HEK293 (cell line): ENCODE measurements at regions of chr6 and their contacts with region 1.

Region 1: GRCh38 chr6:109705258-109705657 is 14.2 kb downstream of the FIG4 start:
- H3K4me3 ChIP-seq: no peak overlapping the region
- H3K27ac ChIP-seq: no peak overlapping the region
- H3K4me1 ChIP-seq: no peaks in the 10 kb centered on the region
- CTCF ChIP-seq: peak; percentile 95

Region 2: DNA sequence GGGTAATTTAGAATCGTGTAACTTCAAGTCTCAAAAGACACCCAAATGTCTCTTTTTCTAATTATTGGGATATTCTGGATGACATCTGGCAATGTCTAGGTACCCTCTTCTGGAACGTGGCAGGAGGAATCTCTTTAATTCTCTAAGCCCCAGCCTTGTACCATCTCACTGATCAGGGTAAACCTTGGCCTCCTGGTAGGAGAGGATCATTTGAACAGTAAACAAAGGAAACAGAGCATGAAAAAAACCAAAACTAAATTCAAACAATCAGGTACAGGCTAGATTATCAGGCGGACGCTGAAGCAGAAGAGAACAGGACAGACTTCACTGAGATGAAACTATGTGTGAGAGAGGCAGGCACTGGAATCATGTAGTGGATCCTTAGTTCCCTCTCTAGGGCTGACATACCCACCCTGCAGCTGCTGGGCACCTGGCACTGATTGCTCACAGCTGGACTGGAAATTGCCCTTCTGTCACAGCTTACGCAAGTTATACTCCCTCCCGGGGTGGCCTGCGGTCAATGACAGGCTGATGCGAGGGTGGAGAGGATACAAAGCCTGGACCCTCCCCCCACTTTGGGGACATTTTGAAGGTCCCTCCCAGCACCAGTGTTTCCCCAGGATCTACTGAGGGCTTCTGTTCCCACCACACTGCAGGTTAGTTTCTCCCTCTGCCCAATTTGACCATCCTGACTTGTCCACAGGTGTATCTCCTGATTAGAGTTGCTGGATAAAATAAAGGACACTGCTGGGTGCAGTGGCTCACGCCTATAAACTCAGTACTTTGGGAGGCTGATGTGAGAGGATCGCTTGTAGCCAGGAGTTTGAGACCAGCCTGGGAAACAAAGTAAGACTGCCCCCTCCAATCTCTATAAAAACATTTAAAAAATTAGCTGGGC is 201.7 kb before region 1 on chr6:
- CTCF ChIA-PET with region 1: no interaction called
- POLR2A ChIA-PET with region 1: no interaction called
- H3K4me3 ChIP-seq: no peak overlapping the region
- H3K27ac ChIP-seq: no peak overlapping the region
- H3K4me1 ChIP-seq: no peaks in the 10 kb centered on the region
- CTCF ChIP-seq: no peak

Region 3: DNA sequence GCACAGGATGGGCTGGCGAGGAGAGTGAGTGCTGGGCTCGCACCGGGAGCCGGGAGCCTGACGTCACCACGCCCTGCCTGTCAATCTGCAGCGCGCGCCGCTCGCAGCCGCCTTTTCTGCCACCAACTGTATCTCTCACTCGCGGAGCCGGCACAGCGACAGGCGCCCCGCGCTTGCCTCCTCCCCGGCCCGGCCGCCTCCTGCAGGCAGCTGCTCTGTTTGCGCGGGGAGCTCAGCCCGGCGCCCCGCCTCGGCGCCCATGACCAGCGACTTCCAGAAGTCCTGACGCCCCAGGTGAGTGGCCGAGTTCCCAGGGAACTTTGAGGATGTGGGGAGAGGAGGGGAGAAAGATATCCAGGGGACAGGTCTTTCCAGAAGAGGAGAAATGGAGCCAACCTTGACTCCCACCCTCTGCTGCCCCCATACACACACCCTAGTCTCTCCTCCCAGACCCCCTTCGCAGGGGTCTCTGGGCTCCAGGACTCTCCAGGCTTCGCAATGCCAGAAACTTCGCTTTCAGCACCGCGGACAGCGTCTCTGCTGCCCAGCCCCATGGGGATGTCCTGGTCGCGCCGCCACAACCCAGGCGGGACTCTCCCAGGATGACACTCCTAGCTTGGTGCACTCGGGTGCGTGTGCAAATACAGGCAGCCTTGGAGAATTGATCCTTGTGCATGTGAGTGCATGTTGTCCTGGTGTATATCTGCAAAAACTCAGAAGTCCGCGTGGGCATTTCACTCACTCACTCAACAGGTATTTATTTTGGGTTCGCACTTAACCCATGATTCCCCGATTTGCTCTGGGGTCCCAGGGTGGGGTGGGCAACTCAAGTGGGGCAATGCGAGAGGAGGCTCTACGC is 273.1 kb after region 1 on chr6 and contains the start of gene GPR6:
- CTCF ChIA-PET with region 1: interaction called, 11 read pairs
- POLR2A ChIA-PET with region 1: no interaction called
- H3K4me3 ChIP-seq: peak within 1 kb of the TSS; percentile 43
- H3K27ac ChIP-seq: no peak within 1 kb of the TSS
- H3K4me1 ChIP-seq: peaks cover 5% of the 10 kb centered on the region
- CTCF ChIP-seq: no peak

Region 4: GRCh38 chr6:110048221-110048875 is 343.1 kb after region 1 on chr6:
- CTCF ChIA-PET with region 1: interaction called, 17 read pairs
- POLR2A ChIA-PET with region 1: no interaction called
- H3K4me3 ChIP-seq: no peak overlapping the region
- H3K27ac ChIP-seq: no peak overlapping the region
- H3K4me1 ChIP-seq: no peaks in the 10 kb centered on the region
- CTCF ChIP-seq: no peak

Region 5: DNA sequence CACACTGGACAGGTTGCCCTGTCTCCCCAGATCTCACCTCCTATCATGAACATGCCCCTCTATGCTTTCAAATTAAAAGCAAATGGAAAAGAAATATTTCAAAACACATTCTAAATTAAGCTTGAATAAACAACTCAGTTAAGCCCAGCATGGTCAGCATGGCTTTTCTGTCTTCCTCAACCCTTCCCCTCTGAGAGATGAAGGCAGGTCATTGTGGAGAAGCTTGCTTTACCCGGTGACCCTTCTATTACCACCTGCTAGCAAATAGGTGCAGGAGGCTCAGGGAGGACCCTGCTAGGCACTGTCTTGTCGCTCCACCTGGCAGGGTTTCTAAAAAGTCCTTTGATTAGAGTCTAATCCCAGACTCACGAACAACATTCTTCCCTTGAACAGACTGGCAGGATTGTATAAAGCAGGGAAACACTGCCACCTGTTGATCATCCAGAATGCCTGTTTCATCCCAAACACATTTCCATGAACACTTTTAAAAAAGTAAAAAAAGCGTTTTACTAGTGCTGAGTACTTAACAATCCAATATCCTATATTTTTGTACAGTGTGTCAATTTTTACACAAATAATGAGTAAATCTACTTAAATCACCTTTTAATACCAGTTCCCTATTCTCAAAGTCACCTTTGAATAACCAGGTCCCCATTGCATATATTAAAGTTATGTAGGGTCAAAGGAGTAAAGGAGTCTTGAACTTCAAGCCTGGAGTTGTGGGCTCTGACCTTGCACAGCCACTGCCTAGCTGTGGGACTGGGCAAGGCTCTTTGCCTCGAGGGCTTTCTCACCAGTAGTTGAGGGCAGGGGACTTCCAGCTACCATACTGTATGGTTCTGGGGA is 348.4 kb after region 1 on chr6:
- CTCF ChIA-PET with region 1: interaction called, 17 read pairs
- POLR2A ChIA-PET with region 1: no interaction called
- H3K4me3 ChIP-seq: no peak overlapping the region
- H3K27ac ChIP-seq: no peak overlapping the region
- H3K4me1 ChIP-seq: no peaks in the 10 kb centered on the region
- CTCF ChIP-seq: peak; percentile 43